ENCODE measurements at regions of chr20 and their contacts with region 1.

Region 1: DNA sequence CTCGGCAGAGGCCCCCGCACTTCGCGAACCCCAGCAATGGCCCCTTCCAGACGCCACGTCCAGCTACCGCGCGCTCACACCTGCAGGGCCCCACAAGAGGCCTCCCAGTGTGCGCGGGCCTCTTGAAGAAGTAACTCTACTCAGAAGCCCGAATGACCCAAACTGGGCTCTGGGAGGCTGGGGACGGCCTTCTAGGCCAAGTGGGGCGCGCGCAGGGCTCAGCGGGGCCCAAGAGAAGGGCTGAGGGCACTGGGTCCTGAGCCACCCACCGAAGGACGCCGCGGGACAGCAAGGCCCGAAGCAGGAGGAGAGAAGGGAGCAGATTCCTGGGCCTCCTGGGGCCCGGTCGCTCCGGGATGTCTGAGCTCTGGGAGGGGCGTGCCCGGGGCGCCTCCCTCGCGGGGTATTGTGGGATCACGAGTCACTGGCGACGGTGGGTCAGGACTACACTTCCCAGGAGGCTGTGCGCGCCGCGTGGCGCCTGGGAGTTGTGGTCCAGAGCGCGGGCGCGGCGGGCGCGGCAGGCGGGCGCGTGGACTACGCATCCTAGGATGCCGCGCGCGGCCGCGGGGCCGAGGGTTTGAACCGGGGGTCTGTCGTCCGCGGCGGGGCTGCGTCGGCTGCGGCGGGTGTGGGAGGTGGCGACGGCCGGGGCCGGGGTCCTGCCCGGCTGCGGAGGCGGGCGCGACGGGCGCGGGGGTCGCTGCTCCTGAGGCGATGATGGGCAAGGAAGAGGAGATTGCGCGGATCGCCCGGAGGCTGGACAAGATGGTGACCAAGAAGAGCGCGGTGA is at the start of gene TCEA2:
- DNase-seq: peak; percentile 68
- H3K4me3 ChIP-seq: peak within 1 kb of the TSS; percentile 84
- CTCF ChIP-seq: no peak

Region 2: DNA sequence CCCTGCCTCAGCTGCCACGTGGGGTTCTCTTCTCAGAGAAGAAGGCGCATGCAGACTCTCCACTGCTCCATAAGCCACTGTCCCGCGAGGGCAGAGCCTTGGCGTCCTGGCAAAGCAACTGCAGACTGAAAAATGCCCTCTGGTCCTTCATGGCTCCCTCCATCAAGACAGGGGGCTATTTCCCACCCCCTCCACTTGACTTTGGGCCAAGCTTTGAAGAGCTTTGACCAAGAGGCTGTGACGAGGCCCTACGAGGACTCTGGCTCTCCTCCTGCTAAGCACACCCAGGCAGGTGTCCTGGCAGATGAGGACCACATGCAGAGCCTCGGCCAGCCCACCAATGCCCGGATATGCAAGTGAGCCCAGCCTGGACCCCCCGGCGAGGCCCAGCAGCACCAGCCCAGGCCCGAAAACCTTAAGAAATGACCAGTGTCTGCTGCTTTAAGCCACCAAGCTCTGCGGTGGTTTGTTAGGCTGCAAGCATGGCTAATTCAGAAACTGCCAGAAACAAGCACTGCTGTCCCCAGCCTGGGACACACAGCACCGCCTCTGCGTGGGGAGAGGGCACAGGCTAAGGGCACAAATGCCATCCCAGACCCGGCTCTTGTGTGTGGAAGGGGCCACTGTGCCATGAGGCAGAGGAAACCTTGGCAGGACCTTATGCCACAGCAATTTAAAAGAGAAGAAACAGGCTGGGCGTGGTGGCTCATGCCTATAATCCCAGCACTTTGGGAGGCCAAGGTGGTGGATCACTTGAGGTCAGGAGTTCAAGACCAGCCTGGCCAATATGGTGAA is 452.0 kb before region 1 on chr20:
- CTCF ChIA-PET with region 1: no interaction called
- POLR2A ChIA-PET with region 1: no interaction called
- DNase-seq: no peak
- H3K4me3 ChIP-seq: no peak overlapping the region
- CTCF ChIP-seq: no peak

Region 3: GRCh38 chr20:63980806-63981728 is 81.7 kb before region 1 on chr20 and contains the start of gene PRPF6:
- CTCF ChIA-PET with region 1: interaction called, 18 read pairs
- POLR2A ChIA-PET with region 1: interaction called, 3 read pairs
- DNase-seq: peak; percentile 44
- H3K4me3 ChIP-seq: peak within 1 kb of the TSS; percentile 99
- CTCF ChIP-seq: peak; percentile 97

Region 4: GRCh38 chr20:64044484-64045247 is 18.1 kb before region 1 on chr20:
- CTCF ChIA-PET with region 1: interaction called, 54 read pairs
- POLR2A ChIA-PET with region 1: no interaction called
- DNase-seq: no peak
- H3K4me3 ChIP-seq: no peak overlapping the region
- CTCF ChIP-seq: no peak

Measured in AG04449 (cell line).